HepG2 (cell line): ENCODE measurements at regions of chr4 and their contacts with region 1.

Region 1: GRCh38 chr4:145347684-145348083 is 134.0 kb upstream of the SMAD1 start:
- DNase-seq: no peak
- ATAC-seq: no peak
- H3K4me3 ChIP-seq: no peak overlapping the region
- H3K27ac ChIP-seq: no peak overlapping the region
- H3K4me1 ChIP-seq: no peaks in the 10 kb centered on the region
- H3K27me3 ChIP-seq: no peaks in the 10 kb centered on the region; a peak in 1 of 5 replicates
- CTCF ChIP-seq: no peak
- EP300 ChIP-seq: no peak
- POLR2A ChIP-seq: no peak
- RAD21 ChIP-seq: no peak

Region 2: GRCh38 chr4:145388043-145388442 is 40.4 kb after region 1 on chr4:
- CTCF ChIA-PET with region 1: no interaction called
- POLR2A ChIA-PET with region 1: no interaction called
- in situ Hi-C with region 1: no loop called
- intact Hi-C with region 1: loop called (anchors 1 kb)
- DNase-seq: no peak
- ATAC-seq: no peak
- H3K4me3 ChIP-seq: no peak overlapping the region
- H3K27ac ChIP-seq: no peak overlapping the region
- H3K4me1 ChIP-seq: no peaks in the 10 kb centered on the region
- H3K27me3 ChIP-seq: peaks cover 0 to 8% of the 10 kb centered on the region in 2 experiments; a peak in 2 of 5 replicates
- CTCF ChIP-seq: no peak
- EP300 ChIP-seq: no peak
- POLR2A ChIP-seq: no peak
- RAD21 ChIP-seq: no peak